IMR-90 (cell line): ENCODE measurements at regions of chr12 and their contacts with region 1.

Region 1: GRCh38 chr12:77504466-77504865 is 326.2 kb upstream of the NAV3 start:
- DNase-seq: no peak
- ATAC-seq: no peak
- H3K4me3 ChIP-seq: no peak overlapping the region
- H3K27ac ChIP-seq: no peak overlapping the region
- H3K4me1 ChIP-seq: no peaks in the 10 kb centered on the region
- H3K27me3 ChIP-seq: no peaks in the 10 kb centered on the region; the same call in 1 of the 2 replicates
- CTCF ChIP-seq: no peak
- POLR2A ChIP-seq: no peak
- RAD21 ChIP-seq: no peak

Region 2: GRCh38 chr12:77553976-77554619 is 49.6 kb after region 1 on chr12:
- CTCF ChIA-PET with region 1: no interaction called
- POLR2A ChIA-PET with region 1: no interaction called
- dilution Hi-C with region 1: no loop called
- in situ Hi-C with region 1: no loop called
- intact Hi-C with region 1: loop called (anchors 2 kb)
- DNase-seq: no peak
- ATAC-seq: no peak
- H3K4me3 ChIP-seq: no peak overlapping the region
- H3K27ac ChIP-seq: no peak overlapping the region
- H3K4me1 ChIP-seq: no peaks in the 10 kb centered on the region
- H3K27me3 ChIP-seq: peaks cover 3% of the 10 kb centered on the region; the same call in 1 of the 2 replicates
- CTCF ChIP-seq: no peak
- POLR2A ChIP-seq: no peak
- RAD21 ChIP-seq: no peak